ENCODE measurements at regions of chr7 and their contacts with region 1.

Region 1: GRCh38 chr7:123154231-123154860 is 45.4 kb downstream of the SLC13A1 start:
- DNase-seq: peak in 2 of 3 donors; percentile 31 to 91
- ATAC-seq: peak; percentile 90
- H3K4me3 ChIP-seq: no peak overlapping the region
- H3K4me1 ChIP-seq: no peaks in the 10 kb centered on the region
- CTCF ChIP-seq: peak; percentile 44

Region 2: DNA sequence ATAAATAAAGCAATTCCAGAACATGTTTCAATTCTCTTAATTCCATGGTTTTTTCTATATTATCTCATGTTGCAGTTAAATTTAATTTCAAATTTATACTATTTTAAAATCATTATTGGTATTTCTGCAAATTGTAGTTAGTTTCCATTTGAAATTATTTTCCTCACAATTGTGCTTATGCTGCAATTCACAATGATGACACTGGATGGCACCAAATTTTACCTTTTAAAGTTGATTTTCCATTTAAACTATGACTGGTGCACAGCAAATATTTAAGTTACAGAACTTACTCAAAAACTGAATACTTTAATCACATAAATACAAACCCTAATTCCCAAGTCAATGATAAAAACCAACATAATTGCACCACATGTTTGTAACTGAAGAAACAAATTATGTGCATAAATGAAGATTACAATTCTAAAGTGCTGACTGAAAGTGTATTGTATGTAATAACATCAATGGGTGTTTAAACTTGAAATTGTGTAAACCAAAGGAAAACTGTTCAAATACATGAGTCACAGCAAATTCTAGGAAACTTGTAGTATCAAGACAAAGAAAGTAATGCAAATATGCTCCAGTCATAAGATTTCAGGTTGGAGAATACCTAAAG is 935.0 kb before region 1 on chr7:
- intact Hi-C with region 1: loop called (anchors 10 kb)
- DNase-seq: peak in 1 of 3 donors; percentile 19
- ATAC-seq: no peak
- H3K4me3 ChIP-seq: no peak overlapping the region
- H3K4me1 ChIP-seq: no peaks in the 10 kb centered on the region
- CTCF ChIP-seq: peak; percentile 37

Region 3: GRCh38 chr7:123319911-123320310 is 165.6 kb after region 1 on chr7:
- intact Hi-C with region 1: no loop called
- DNase-seq: no peak
- ATAC-seq: no peak
- H3K4me3 ChIP-seq: no peak overlapping the region
- H3K4me1 ChIP-seq: no peaks in the 10 kb centered on the region
- CTCF ChIP-seq: no peak

Region 4: DNA sequence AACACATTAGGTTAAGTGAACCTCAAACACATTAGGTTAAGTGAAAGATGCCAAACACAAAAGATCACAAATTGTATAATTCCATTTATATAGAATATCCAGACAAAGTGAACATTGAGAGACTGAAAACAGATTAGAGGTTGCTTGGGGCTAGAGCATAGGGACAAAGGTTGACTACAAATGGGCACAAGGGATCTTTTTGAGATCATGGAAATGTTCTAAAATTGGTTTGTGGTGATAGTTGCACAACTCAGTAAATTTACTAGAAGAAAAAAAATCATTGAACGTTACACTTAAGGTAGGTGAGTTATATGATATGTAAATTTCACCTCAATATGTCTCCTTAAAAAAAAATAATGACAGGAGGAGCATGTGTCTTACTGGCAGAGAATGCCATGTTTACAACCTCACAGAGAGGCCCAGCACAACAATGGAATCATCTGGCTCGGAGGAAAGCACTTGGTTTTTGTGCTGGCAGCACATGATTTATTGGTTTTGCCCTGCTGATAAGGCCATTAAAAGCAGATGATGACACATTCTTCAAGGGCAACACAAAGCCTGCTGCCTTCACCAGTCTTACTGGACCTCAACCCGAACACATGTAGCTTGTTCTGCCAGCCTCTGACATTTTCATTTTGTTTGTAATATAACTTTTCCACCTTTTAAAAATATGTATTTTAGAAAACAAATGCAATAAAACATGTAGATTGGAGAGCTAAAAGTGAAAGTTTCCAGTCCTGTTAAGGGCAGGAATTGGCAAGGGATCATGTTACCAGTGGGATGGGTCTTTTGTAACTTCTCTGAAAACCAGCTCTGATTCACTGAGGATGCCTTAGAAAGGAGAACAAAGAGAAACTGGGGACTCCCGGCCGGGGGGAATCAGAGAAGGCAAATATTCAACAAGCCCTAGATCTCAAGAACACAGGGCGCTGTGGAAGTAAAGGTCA is 489.4 kb after region 1 on chr7:
- intact Hi-C with region 1: no loop called
- DNase-seq: no peak
- ATAC-seq: peak; percentile 52
- H3K4me3 ChIP-seq: no peak overlapping the region
- H3K4me1 ChIP-seq: no peaks in the 10 kb centered on the region
- CTCF ChIP-seq: no peak